ENCODE measurements at regions of chr19 and their contacts with region 1.

Region 1: GRCh38 chr19:44051654-44052402 is at the start of gene ZNF223:
- DNase-seq: peak; percentile 95 to 99 (median 97)

Region 2: DNA sequence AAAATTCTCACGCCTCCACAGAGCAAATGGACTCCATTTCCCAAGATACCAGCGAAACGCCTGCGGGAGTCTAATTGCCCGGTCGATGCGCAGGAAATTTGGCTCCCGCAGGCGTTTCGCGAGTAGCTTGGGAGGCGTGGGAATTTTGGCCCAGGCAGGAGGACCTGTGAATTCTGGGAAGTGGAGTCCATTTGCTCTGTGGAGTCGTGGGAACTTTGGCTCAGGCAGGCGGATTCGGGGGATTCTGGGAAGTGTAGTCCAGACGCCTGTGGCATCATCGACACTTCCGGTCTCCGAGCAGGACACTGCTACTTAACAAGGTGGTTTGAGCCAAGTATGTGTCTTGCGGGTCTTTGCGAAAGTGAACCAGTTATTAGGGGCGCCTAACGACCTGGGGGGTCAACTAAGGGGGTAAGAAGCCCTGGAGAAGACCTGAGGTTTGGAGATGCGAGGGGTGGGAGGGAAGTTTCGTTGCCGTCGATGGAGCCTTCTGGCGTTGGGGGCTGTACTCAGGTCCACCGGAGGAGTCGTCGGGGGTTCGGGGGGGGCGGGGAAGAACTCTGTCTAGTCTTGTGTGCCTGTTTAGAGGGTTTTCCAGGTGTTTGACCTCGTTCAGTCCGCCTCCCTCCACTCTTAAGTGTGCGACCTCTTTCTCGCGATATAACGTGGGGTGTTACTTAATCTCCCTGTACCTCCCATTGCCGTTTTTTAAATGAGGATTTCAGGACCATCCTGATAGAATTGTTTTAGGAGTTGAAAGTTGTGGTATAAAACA is 67.7 kb before region 1 on chr19 and contains the start of gene ZNF155:
- intact Hi-C with region 1: loop called (anchors 1 kb)
- DNase-seq: peak; percentile 87 to 98 (median 93)

Region 3: DNA sequence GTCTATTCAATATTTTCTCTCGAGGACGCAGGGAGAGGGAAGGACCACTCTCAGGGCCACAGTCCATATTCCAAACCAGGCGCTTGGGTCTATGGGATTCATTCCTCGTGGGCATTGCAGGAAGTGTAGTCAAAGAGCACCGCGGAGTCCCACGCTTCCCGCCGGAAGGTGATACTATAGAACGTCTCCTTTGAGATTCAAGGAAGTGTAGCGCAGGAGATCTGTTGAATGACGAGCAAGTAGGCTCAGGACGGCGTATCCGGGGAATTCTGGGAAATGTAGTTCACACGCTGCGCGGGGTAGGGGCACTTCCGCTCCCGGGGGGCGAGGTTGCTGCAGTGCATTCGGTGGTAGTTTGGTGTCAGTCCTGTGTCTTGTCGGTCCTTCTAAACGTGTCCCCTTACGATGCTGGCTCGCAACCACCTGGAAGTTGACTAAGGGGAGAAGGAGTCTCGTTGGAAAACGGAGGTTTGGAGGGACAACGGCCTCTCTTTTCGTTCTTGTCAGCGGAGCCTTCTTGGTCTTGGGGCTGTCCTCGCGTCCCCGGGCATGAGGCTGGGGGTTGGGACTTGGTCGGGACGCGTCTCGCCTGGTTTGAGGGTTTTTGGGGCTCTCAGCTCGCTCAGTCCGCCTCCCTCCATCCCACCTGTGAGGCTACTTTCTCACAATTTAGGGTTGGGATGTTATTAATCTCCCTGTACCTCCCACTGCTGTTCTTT is 20.2 kb after region 1 on chr19 and contains the start of gene ZNF284:
- intact Hi-C with region 1: loop called (anchors 1 kb)
- DNase-seq: peak; percentile 86 to 98 (median 90)

Region 4: DNA sequence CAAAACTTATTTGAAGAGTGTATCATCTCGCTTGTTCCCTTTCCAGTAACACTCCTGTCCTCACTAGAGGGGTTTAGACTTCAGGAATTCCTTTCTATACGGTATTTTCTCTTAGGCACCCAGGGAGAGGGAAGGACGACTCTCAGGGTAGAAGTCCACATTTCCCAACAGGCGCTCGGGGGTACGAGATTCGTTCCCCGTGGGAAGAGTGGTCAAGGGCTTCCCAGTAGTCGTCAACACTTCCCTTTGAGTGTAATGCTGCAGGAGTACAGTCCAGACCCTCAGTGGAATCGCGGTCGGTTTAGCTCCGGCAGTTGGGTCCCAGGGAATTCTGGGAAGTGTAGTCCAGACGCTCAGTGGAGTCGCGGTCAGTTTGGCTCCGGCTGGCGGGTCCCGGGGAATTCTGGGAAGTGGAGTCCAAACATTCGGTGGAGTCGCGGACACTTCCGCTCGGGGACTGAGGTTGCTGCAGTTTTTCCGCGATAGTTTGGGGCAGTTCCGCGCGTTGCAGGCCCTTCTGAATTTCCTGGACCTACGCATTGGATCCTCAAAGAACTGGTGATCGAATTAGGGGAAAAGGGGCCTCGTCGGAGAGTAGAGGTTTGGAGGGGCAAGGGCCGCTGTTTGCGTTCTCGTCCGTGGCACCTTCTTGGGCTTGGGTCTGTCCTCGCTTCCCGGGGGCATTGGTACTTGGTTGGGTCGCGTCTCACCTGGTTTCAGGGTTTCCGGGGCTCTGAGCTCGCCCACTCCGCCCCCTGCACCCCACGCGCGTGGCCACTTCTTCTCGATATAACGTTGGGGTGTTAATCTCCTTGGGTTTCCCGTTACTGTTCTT is 42.3 kb after region 1 on chr19 and contains the start of gene ZNF224:
- intact Hi-C with region 1: loop called (anchors 1 kb)
- DNase-seq: peak; percentile 91 to 99 (median 94)

Region 5: DNA sequence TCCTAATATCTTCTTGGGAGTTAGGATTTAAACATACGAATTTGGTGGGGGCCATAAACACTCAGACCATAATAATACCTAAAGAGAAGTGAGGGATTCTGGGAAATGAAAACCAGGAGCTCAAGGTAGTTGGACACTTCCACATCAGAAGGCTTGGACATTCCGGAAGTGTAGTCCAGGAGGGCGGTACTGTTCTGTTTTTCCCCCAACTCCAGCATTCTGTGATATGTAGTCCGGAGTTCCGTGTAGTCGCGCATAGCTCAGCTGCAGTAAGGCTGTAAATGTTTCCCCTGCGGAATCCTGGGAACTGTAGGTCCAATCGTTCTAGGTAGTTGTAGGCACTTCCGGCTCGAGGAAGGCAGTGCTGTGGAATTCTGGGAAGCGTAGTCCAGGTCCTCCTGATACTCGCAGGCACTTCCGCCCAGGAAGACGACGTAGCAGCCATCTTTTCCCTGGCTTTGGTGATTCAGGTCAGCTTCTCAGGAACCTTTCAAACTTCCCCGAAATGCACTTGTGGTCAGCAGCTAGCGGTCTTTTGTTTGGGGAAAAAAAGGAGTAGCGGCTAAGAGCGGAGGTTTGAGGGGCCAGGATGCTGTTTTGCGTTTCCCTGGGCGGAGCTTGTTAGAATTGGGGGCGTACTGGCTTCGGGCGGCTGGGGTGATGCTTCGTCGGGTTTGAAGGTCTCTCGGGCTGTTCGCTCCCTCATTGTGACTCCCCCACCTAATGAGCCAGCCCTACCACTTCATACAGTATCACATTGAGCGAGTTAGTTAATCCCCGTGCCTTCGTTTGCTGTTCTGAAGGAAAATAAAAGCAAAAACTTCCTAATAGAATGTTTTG is 113.1 kb after region 1 on chr19 and contains the start of gene ZNF226:
- intact Hi-C with region 1: loop called (anchors 2 kb)
- DNase-seq: peak; percentile 88 to 98 (median 92)

Measured in posterior cingulate gyrus (tissue), 11 donors.